Activated naive CD4-positive, alpha-beta T cell treated with anti-CD3 and anti-CD28 coated beads for 36 hours (primary cell): ENCODE measurements at regions of chrX and their contacts with region 1.

Region 1: GRCh38 chrX:65985922-65986588 is 53.8 kb downstream of the VSIG4 start:
- DNase-seq: peak; percentile 77
- H3K4me3 Mint-ChIP-seq: no peak overlapping the region
- H3K27ac Mint-ChIP-seq: peak overlapping the region; percentile 84
- H3K4me1 Mint-ChIP-seq: peaks cover 27% of the 10 kb centered on the region
- H3K27me3 Mint-ChIP-seq: no peaks in the 10 kb centered on the region

Region 2: GRCh38 chrX:65534450-65535292 is 451.4 kb before region 1 on chrX and contains the start of gene LAS1L:
- CTCF ChIA-PET with region 1: no interaction called
- intact Hi-C with region 1: loop called (anchors 2 kb)
- DNase-seq: peak; percentile 93
- H3K4me3 Mint-ChIP-seq: peak within 1 kb of the TSS; percentile 96
- H3K27ac Mint-ChIP-seq: peak within 1 kb of the TSS; percentile 89
- H3K4me1 Mint-ChIP-seq: peaks cover 16% of the 10 kb centered on the region
- H3K27me3 Mint-ChIP-seq: no peaks in the 10 kb centered on the region
- total RNA-seq, gene LAS1L: 60.4 to 61.1 TPM

Region 3: DNA sequence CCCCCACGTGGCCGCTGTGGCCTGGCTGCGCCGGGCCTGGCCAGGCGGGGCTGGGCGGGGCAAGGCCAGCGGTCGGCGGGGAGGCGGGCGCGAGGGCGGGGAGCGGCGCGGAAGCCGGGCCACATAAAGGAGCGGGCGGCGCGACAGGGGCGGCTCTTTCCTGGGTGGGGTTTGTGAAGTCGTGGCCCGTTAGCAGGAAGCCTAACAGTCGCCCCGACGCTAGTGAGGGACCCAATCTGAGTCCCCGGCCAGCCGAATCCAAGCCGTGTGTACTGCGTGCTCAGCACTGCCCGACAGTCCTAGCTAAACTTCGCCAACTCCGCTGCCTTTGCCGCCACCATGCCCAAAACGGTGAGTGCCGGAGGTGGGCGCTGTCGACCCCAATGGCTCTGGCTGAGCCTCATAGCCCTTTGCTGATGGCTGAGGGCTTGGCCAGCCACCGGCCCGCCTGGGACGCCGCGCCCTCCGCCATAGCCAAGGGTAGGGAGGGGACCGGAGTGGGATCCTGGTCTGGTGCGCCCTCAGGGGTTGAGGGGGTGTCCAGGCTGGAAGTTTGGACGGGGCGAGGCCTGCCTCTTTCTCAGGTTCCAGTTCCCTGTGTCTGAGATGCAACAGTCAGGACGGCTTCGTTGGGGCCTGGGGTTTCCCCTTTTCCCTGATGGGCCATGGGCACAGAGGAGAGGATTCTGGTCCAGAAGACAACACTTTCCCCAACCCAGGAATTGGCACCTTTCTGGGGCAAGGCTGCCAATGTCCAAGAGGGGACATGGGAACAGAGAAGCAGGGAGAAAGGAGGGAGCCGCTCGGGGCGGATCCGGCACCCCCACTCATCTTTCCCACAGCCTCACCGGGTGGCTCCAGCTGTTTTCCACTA is 318.3 kb before region 1 on chrX and contains the start of gene MSN:
- CTCF ChIA-PET with region 1: no interaction called
- intact Hi-C with region 1: loop called (anchors 2 kb)
- DNase-seq: peak; percentile 78
- H3K4me3 Mint-ChIP-seq: peak within 1 kb of the TSS; percentile 94
- H3K27ac Mint-ChIP-seq: peak within 1 kb of the TSS; percentile 94
- H3K4me1 Mint-ChIP-seq: peaks cover 23% of the 10 kb centered on the region
- H3K27me3 Mint-ChIP-seq: no peaks in the 10 kb centered on the region
- total RNA-seq, gene MSN: 482 to 507 TPM

Region 4: GRCh38 chrX:65750674-65751469 is 235.2 kb before region 1 on chrX:
- CTCF ChIA-PET with region 1: interaction called, 3 read pairs
- intact Hi-C with region 1: loop called (anchors 1 kb)
- DNase-seq: peak; percentile 60
- H3K4me3 Mint-ChIP-seq: peak overlapping the region; percentile 4
- H3K27ac Mint-ChIP-seq: peak overlapping the region; percentile 30
- H3K4me1 Mint-ChIP-seq: peaks cover 56% of the 10 kb centered on the region
- H3K27me3 Mint-ChIP-seq: no peaks in the 10 kb centered on the region

Region 5: GRCh38 chrX:65920659-65921066 is 65.4 kb before region 1 on chrX:
- CTCF ChIA-PET with region 1: no interaction called
- intact Hi-C with region 1: no loop called
- DNase-seq: no peak
- H3K4me3 Mint-ChIP-seq: no peak overlapping the region
- H3K27ac Mint-ChIP-seq: no peak overlapping the region
- H3K4me1 Mint-ChIP-seq: peaks cover 39% of the 10 kb centered on the region
- H3K27me3 Mint-ChIP-seq: no peaks in the 10 kb centered on the region

Region 6: GRCh38 chrX:65932176-65933084 is 53.6 kb before region 1 on chrX:
- CTCF ChIA-PET with region 1: no interaction called
- intact Hi-C with region 1: loop called (anchors 1 kb)
- DNase-seq: peak; percentile 66
- H3K4me3 Mint-ChIP-seq: no peak overlapping the region
- H3K27ac Mint-ChIP-seq: peak overlapping the region; percentile 73
- H3K4me1 Mint-ChIP-seq: peaks cover 20% of the 10 kb centered on the region
- H3K27me3 Mint-ChIP-seq: no peaks in the 10 kb centered on the region

Region 7: DNA sequence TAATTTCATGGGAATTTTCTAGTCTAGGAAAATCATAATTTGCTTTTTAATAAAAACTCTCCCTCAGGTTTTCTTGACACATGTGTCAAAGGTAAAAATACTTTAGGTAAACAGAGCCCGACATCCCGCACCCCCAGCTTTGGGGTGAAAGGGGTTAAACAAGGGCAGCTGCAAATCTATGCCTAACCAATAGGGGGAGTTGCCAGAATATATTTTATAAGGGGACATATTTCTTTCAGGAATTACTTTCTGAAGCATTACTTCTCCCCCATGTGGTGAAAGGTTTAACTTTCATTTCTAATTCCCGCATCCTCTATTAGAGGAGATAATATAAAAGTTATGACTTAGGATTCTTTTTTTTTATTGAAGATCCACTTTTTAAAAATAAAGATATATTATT is 124.1 kb after region 1 on chrX:
- CTCF ChIA-PET with region 1: interaction called, 4 read pairs
- intact Hi-C with region 1: loop called (anchors 1 kb)
- DNase-seq: peak; percentile 8
- H3K4me3 Mint-ChIP-seq: no peak overlapping the region
- H3K27ac Mint-ChIP-seq: no peak overlapping the region
- H3K4me1 Mint-ChIP-seq: peaks cover 7% of the 10 kb centered on the region
- H3K27me3 Mint-ChIP-seq: no peaks in the 10 kb centered on the region

Region 8: GRCh38 chrX:66130469-66130868 is 144.4 kb after region 1 on chrX:
- CTCF ChIA-PET with region 1: no interaction called
- intact Hi-C with region 1: no loop called
- DNase-seq: no peak
- H3K4me3 Mint-ChIP-seq: no peak overlapping the region
- H3K27ac Mint-ChIP-seq: no peak overlapping the region
- H3K4me1 Mint-ChIP-seq: no peaks in the 10 kb centered on the region
- H3K27me3 Mint-ChIP-seq: no peaks in the 10 kb centered on the region

Region 9: GRCh38 chrX:66191563-66191962 is 205.5 kb after region 1 on chrX:
- CTCF ChIA-PET with region 1: no interaction called
- intact Hi-C with region 1: no loop called
- DNase-seq: no peak
- H3K4me3 Mint-ChIP-seq: no peak overlapping the region
- H3K27ac Mint-ChIP-seq: no peak overlapping the region
- H3K4me1 Mint-ChIP-seq: peaks cover 4% of the 10 kb centered on the region
- H3K27me3 Mint-ChIP-seq: no peaks in the 10 kb centered on the region